AG04449 (cell line): ENCODE measurements at regions of chr5 and their contacts with region 1.

Region 1: GRCh38 chr5:96125231-96125891 is 163.7 kb upstream of the ELL2 start:
- DNase-seq: no peak
- H3K4me3 ChIP-seq: no peak overlapping the region
- CTCF ChIP-seq: no peak

Region 2: DNA sequence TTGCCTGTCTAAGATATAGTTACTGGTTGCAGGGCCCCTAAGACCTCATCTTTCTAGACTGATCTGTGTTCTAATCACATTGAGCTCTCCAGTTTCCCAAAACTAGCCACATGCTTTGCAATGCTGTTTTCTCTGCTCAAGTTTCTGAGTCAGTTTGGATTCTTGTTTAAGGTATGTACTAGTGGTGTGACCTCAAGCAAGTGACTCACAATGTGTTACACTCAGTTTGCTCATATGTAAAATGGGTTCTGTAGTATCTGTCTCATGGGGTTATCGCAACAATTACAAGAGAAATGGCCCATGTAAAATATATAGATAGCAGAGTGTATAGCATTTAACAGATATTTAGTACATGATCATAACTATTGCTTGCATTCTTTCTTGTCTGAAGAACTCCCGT is 10.6 kb before region 1 on chr5:
- CTCF ChIA-PET with region 1: interaction called, 12 read pairs
- POLR2A ChIA-PET with region 1: no interaction called
- DNase-seq: no peak
- H3K4me3 ChIP-seq: no peak overlapping the region
- CTCF ChIP-seq: no peak